A549 (cell line): ENCODE measurements at regions of chr10 and their contacts with region 1.

Region 1: GRCh38 chr10:71860243-71861029 is 9.4 kb upstream of the PSAP start:
- DNase-seq: peak; percentile 95 to 99
- ATAC-seq: peak; percentile 97 to 98
- H3K4me3 ChIP-seq: no peak overlapping the region
- H3K27ac ChIP-seq: peak overlapping the region; percentile 91 to 93
- H3K4me1 ChIP-seq: peaks cover 66% of the 10 kb centered on the region
- CTCF ChIP-seq: no peak
- EP300 ChIP-seq: peak; percentile 91 to 95; a peak in 4 of 5 replicates
- POLR2A ChIP-seq: no peak; the same call in 1 of the 2 replicates
- RAD21 ChIP-seq: peak; percentile 10 to 50; a peak in 4 of 5 replicates

Region 2: GRCh38 chr10:71830720-71831119 is 29.7 kb before region 1 on chr10:
- CTCF ChIA-PET with region 1: no interaction called
- POLR2A ChIA-PET with region 1: no interaction called
- DNase-seq: no peak
- ATAC-seq: no peak
- H3K4me3 ChIP-seq: no peak overlapping the region
- H3K27ac ChIP-seq: no peak overlapping the region
- H3K4me1 ChIP-seq: peaks cover 23% of the 10 kb centered on the region
- CTCF ChIP-seq: no peak
- EP300 ChIP-seq: no peak
- POLR2A ChIP-seq: no peak
- RAD21 ChIP-seq: no peak

Region 3: DNA sequence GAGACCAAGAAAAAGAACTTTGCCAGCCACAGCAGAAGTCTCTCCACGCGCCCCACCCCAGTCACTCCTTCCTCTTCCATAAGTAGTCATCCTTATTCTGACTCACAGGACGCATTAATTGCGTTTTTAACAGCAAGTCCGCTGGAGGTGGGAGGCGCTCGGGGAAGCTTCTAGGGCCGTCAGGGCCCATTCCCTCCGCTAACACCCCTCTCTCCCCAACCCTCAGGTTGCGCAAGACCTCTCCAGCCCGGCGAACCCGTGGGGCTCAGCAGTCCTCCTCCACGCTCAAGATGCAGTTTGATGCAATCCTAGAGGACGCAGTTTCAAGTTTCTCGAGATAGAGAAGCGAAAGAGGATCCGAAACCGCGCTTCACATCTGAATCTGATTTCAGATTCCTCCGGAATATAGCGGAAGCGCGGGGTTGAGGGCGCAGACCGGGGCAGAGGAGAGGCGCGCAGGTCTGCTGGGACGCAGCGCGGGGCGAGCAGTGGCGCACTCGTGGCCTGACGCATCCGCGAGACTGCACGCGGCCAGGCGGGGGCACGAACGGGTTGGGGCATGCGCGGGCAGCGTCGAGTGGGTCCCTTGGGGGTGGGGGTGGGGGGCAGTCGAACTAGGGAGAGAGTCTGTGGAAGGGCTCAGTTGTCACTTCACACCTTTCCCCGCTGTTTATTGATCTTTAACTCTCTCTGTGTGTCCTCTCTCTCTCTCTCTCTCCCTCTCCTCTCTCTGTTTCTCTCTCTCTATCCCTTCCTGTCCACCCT is 28.4 kb after region 1 on chr10:
- CTCF ChIA-PET with region 1: interaction called, 4 read pairs
- POLR2A ChIA-PET with region 1: interaction called, 13 read pairs
- DNase-seq: peak; percentile 72 to 79
- ATAC-seq: peak; percentile 94 to 96
- H3K4me3 ChIP-seq: peak overlapping the region; percentile 61
- H3K27ac ChIP-seq: peak overlapping the region; percentile 94 to 97
- H3K4me1 ChIP-seq: peaks cover 30% of the 10 kb centered on the region
- CTCF ChIP-seq: peak; percentile 8; the same call in 1 of the 3 replicates
- EP300 ChIP-seq: no peak
- POLR2A ChIP-seq: peak; percentile 80
- RAD21 ChIP-seq: peak in 1 of 2 experiments; percentile 47; a peak in 2 of 5 replicates